ENCODE measurements at regions of chr4 and their contacts with region 1.

Region 1: GRCh38 chr4:174714393-174715211 is 114.4 kb downstream of the GLRA3 start:
- DNase-seq: peak; percentile 73
- H3K4me3 Mint-ChIP-seq: no peak overlapping the region
- H3K27ac Mint-ChIP-seq: no peak overlapping the region
- H3K4me1 Mint-ChIP-seq: peaks cover 8% of the 10 kb centered on the region
- H3K27me3 Mint-ChIP-seq: no peaks in the 10 kb centered on the region
- CTCF ChIP-seq: peak; percentile 61

Region 2: DNA sequence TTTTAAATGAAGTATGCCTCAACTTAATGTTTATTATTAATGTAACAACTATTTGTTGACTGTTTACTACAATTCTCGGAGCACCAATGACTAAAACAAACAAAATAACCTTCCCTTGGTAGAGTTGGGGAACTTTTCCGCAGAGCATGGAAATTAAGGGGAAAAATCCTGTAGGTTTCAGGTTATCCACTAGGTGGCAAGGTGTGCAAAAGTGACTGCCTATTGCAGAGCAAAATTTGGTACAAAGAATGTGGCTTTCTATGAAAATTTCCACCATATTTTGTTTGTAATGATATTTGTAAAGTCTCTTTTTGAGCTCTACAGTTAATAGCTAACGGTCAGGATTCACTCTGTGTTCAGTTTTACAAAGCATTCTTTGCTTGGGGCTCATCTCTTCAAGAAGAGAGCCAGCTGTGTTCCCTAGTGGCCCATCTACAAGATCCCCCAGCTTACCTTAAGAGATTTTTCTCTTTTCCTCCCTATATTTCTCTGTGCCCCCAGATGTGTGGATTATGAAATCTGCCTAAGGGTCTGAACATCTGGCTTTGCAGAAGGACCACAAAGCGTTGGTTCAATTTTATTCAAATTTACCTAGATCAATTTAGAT is 492.2 kb before region 1 on chr4:
- CTCF ChIA-PET with region 1: no interaction called
- POLR2A ChIA-PET with region 1: no interaction called
- intact Hi-C with region 1: loop called (anchors 1 kb)
- DNase-seq: peak; percentile 52
- H3K4me3 Mint-ChIP-seq: no peak overlapping the region
- H3K27ac Mint-ChIP-seq: no peak overlapping the region
- H3K4me1 Mint-ChIP-seq: no peaks in the 10 kb centered on the region
- H3K27me3 Mint-ChIP-seq: no peaks in the 10 kb centered on the region
- CTCF ChIP-seq: peak; percentile 58

Region 3: DNA sequence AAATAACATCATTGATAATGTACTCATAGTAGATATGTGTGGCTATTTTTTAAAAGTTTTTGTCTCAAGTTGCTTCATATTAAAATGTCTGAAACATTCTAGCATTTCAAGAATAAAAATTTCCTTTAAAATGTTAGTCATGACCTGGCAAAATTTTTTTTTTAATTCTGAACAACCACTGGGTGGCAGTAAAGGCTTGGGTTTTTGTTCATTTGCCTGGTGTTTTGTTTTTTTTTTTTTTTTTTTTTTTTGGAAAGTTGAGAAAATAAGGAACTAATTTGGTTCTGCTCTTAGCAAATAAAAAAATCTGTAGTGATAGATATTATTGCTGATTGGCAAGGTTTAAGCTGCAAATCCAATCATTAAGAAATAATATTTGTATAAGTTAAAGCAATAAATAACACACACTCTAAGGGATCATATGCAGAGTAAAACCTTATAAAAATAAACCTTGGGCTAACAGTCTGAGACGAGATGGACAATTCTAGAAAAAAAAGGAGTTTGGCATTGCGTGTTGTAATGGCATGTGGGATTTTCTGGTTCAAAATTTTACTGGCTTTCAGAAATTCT is 349.5 kb before region 1 on chr4:
- CTCF ChIA-PET with region 1: interaction called, 10 read pairs
- POLR2A ChIA-PET with region 1: no interaction called
- intact Hi-C with region 1: loop called (anchors 1 kb)
- DNase-seq: peak; percentile 54
- H3K4me3 Mint-ChIP-seq: no peak overlapping the region
- H3K27ac Mint-ChIP-seq: no peak overlapping the region
- H3K4me1 Mint-ChIP-seq: no peaks in the 10 kb centered on the region
- H3K27me3 Mint-ChIP-seq: no peaks in the 10 kb centered on the region
- CTCF ChIP-seq: peak; percentile 41

Region 4: DNA sequence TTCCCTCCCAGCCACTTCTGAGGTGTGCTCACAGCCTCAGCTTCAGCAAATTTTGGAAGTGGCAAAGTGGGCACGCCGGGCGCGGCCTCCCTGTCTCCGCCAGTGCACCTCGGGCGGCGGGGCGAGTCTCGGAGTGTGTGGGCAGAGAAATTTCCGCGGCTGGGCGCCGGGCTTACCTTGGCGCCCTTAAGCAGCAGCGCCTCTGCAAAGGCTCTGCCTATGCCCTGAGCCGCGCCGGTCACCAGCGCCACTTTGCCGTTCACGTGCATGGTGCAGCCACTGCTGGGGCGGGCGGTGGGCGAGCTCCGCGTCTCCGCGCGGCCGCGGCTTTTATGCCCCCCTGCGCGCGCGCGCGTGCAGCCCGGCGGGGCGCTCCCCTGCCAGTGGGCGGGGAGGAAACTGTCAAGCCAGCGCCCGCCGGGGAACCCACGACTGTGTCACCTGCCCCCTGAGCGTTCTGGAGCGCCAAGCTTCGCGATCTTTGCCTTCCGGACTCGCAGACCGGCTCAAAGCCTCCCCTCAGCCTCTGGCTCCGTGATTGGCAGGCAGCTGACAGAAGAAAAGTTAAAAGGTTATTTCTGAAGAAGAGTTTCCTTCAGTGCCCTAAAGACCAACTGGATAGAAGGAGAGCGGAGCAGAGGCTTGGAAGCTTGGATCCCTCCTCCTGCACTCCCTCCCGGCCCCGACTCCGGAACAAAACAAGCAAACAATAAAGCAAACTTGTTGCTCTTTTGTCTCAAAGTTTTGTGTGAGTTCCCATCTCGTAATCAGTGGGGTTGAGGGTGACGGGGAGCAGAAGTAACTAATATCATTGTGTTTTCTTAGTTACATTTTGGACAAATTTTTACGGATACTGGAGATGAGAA is 192.2 kb before region 1 on chr4 and contains the start of gene HPGD:
- CTCF ChIA-PET with region 1: interaction called, 10 read pairs
- POLR2A ChIA-PET with region 1: no interaction called
- intact Hi-C with region 1: loop called (anchors 5 kb)
- DNase-seq: peak; percentile 37
- H3K4me3 Mint-ChIP-seq: peak within 1 kb of the TSS; percentile 88
- H3K27ac Mint-ChIP-seq: no peak within 1 kb of the TSS
- H3K4me1 Mint-ChIP-seq: peaks cover 8% of the 10 kb centered on the region
- H3K27me3 Mint-ChIP-seq: no peaks in the 10 kb centered on the region
- CTCF ChIP-seq: no peak
- total RNA-seq, gene HPGD: 0.59 and 0.77 TPM in 2 replicates

Region 5: DNA sequence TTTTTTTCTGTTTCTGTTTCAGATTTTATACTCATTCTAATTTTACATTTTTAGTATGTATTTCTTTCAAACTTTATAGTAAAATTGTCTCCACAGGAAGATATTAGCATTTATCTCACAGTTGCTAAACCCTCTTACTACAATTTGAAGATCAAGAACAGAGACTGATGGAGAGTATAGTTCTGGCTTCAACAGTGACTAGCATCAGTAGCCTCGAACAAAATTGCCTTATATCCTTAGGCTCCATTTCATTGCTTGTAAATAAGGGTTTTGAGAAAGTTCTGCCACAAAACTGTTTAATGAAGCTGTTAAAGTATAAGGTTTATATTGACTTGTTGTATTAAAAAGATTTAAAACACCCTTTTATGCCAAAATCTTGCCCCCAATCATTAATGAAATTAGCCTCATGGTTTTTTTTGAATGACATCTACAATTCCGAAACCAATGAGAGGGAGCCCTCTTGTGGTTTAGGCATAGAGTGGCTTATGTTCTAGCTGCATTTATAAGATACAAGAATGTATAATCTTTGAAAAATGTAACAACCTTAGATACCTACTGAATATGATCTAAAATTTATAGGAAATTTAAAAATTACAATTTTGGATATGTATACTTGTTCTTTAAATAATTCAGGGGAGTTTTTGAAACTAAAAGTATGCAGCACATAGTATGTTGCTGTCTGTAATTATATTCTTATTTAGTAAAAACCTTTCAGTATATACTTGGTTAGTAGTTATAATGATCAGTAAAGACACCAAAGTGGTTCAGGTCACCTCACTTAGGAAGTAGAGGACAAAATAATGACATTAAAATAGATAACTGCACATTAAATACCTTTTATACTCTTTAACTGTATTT is 82.5 kb before region 1 on chr4:
- CTCF ChIA-PET with region 1: interaction called, 12 read pairs
- POLR2A ChIA-PET with region 1: no interaction called
- intact Hi-C with region 1: loop called (anchors 1 kb)
- DNase-seq: peak; percentile 71
- H3K4me3 Mint-ChIP-seq: no peak overlapping the region
- H3K27ac Mint-ChIP-seq: no peak overlapping the region
- H3K4me1 Mint-ChIP-seq: no peaks in the 10 kb centered on the region
- H3K27me3 Mint-ChIP-seq: no peaks in the 10 kb centered on the region
- CTCF ChIP-seq: peak; percentile 62

Region 6: GRCh38 chr4:174724976-174725375 is 10.4 kb after region 1 on chr4:
- CTCF ChIA-PET with region 1: interaction called, 15 read pairs
- POLR2A ChIA-PET with region 1: no interaction called
- intact Hi-C with region 1: no loop called
- DNase-seq: no peak
- H3K4me3 Mint-ChIP-seq: no peak overlapping the region
- H3K27ac Mint-ChIP-seq: no peak overlapping the region
- H3K4me1 Mint-ChIP-seq: peaks cover 6% of the 10 kb centered on the region
- H3K27me3 Mint-ChIP-seq: no peaks in the 10 kb centered on the region
- CTCF ChIP-seq: no peak

Measured in MCF 10A (cell line).